H1 (cell line): ENCODE measurements at regions of chr14 and their contacts with region 1.

Region 1: DNA sequence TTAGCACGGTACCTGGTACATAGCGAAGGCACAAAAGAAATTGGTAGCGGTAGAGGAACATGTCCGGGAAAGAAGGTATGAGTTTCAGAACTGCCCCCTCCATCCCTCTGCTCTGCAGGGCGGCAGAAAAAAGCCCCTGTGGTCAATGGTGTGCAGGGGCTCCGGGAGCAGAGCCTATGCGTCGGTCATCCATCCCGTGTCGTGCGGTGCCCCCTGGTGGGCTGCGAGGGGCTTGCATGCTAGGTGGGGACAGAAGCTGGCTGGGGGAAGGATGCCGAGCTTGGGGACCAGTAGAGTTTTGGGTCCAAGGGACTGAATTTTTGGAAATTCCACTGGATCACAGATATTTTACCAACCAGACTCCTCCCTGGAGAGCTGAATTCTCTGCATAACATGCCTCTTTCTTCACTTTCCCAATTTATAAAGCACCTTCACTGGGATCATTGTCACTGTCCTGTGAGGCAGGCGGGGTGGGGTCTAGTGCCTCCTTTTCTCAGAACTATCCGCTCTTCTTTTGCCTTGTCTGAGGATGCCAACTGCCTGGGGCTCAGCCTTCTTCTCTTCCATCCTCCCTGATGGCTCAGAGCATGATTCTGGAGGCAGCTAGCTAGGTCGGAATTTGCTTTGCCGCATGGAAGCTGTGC is 148.7 kb downstream of the SMOC1 start:
- DNase-seq: peak; percentile 33 to 99
- H3K4me3 ChIP-seq: no peak overlapping the region
- H3K27ac ChIP-seq: no peak overlapping the region
- H3K4me1 ChIP-seq: peaks cover 2 to 9% (median 6%) of the 10 kb centered on the region in 4 experiments
- H3K27me3 ChIP-seq: no peaks in the 10 kb centered on the region; a peak in 1 of 7 replicates
- CTCF ChIP-seq: peak; percentile 95 to 98 (median 98)
- EP300 ChIP-seq: no peak
- POLR2A ChIP-seq: no peak
- RAD21 ChIP-seq: peak; percentile 99 to 100

Region 2: DNA sequence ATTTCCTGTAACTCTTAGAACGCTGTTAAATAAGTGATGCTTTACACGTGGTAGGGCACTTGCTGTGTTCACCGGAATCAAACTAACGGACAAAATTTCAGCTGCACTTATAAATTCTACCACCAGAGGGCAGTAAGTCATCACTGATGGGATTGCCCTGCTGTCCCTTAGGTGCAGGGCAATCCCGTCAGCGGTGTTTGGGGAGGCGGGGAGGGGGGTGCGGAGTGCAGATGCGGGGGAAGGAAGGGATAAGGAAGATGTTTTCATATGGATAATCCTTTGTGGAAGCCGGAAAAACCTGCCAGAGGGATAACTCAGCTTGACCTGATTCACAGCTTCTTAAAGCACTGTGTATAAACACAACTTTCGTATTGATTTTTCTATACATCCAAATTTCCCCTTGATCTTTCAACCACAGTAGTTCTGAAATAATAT is 209.1 kb before region 1 on chr14:
- CTCF ChIA-PET with region 1: interaction called, 132 read pairs
- POLR2A ChIA-PET with region 1: no interaction called
- DNase-seq: peak; percentile 51 to 79
- H3K4me3 ChIP-seq: no peak overlapping the region
- H3K27ac ChIP-seq: no peak overlapping the region
- H3K4me1 ChIP-seq: no peaks in the 10 kb centered on the region
- H3K27me3 ChIP-seq: no peaks in the 10 kb centered on the region
- CTCF ChIP-seq: peak; percentile 44 to 95 (median 81)
- EP300 ChIP-seq: peak in 1 of 2 experiments; percentile 48; a peak in 1 of 3 replicates
- POLR2A ChIP-seq: no peak
- RAD21 ChIP-seq: peak; percentile 98 to 99

Region 3: DNA sequence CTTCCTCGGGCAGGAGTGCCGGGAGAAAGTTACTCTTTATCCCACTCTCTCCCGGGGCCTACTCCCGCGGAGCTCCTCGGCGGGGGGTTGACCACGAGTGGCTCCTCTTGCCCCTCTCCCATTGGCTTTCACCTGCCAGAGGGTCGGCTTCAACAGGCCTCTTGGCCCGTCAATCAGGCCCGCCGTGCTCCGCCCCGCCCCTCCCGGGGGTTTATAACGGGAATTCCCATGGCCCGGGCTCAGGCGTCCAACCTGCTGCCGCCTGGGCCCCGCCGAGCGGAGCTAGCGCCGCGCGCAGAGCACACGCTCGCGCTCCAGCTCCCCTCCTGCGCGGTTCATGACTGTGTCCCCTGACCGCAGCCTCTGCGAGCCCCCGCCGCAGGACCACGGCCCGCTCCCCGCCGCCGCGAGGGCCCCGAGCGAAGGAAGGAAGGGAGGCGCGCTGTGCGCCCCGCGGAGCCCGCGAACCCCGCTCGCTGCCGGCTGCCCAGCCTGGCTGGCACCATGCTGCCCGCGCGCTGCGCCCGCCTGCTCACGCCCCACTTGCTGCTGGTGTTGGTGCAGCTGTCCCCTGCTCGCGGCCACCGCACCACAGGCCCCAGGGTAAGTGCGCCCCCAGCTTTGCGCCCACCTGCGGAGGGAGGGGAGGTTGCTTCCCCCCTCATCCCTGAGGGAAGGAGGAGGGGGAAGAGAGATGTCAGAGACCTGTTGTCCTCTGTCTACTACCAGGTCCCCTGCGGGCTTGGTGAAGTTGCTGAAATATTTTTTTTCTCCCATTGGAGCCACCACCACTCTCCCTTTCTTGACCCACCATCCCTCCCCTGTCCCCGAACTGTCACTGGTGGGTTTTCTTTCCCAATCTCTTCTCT is 148.5 kb before region 1 on chr14 and contains the start of gene SMOC1:
- CTCF ChIA-PET with region 1: interaction called, 79 read pairs
- POLR2A ChIA-PET with region 1: interaction called, 3 read pairs
- DNase-seq: peak; percentile 31 to 88
- H3K4me3 ChIP-seq: peak within 1 kb of the TSS; percentile 66 to 81 (median 74)
- H3K27ac ChIP-seq: no peak within 1 kb of the TSS
- H3K4me1 ChIP-seq: peaks cover 0 to 6% (median 4%) of the 10 kb centered on the region in 4 experiments; a peak in 3 of 7 replicates
- H3K27me3 ChIP-seq: peaks cover 3 to 26% (median 21%) of the 10 kb centered on the region in 4 experiments; a peak in 6 of 7 replicates
- CTCF ChIP-seq: no peak
- EP300 ChIP-seq: no peak
- POLR2A ChIP-seq: no peak
- RAD21 ChIP-seq: no peak; a peak in 1 of 4 replicates
- total RNA-seq, gene SMOC1: 1.6 and 2.4 TPM in 2 replicates

Region 4: DNA sequence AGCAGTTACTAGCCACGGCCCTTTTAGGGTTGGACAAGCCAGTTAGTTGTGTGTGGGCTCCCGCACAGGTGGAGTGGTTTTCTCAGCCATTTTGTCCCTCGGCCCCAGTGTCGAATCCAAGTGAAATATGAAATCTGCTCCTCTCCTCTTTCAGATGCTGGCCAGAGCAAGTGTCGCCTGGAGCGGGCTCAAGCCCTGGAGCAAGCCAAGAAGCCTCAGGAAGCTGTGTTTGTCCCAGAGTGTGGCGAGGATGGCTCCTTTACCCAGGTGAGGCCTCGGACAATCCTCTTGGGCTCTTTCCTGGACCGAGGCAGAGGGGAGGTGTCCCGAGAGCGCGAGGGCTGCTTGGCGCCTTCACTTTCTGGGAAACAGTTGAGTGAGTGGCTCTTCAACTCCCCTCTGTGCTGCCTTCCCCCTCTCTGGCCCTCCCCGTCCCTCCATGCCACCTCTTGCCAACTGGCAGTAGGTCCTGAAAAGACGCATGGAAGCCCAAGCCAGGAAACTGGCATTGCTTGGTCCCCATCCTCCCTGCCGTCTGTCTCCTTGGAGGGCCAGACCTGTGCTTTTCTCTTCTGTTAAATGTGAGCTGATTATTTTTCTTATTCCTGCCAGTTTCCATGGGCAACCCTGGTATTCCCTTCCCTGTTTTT is 74.5 kb before region 1 on chr14:
- CTCF ChIA-PET with region 1: interaction called, 15 read pairs
- POLR2A ChIA-PET with region 1: no interaction called
- DNase-seq: no peak
- H3K4me3 ChIP-seq: no peak overlapping the region
- H3K27ac ChIP-seq: no peak overlapping the region
- H3K4me1 ChIP-seq: no peaks in the 10 kb centered on the region; a peak in 1 of 7 replicates
- H3K27me3 ChIP-seq: no peaks in the 10 kb centered on the region
- CTCF ChIP-seq: no peak
- EP300 ChIP-seq: no peak
- POLR2A ChIP-seq: no peak
- RAD21 ChIP-seq: no peak

Region 5: GRCh38 chr14:70013269-70013873 is 14.5 kb before region 1 on chr14:
- CTCF ChIA-PET with region 1: interaction called, 45 read pairs
- POLR2A ChIA-PET with region 1: interaction called, 3 read pairs
- DNase-seq: peak; percentile 34 to 94
- H3K4me3 ChIP-seq: no peak overlapping the region
- H3K27ac ChIP-seq: no peak overlapping the region
- H3K4me1 ChIP-seq: peaks cover 0 to 8% (median 5%) of the 10 kb centered on the region in 4 experiments; a peak in 3 of 7 replicates
- H3K27me3 ChIP-seq: no peaks in the 10 kb centered on the region
- CTCF ChIP-seq: peak; percentile 85 to 92 (median 89)
- EP300 ChIP-seq: no peak
- POLR2A ChIP-seq: no peak
- RAD21 ChIP-seq: peak; percentile 77 to 87

Region 6: GRCh38 chr14:70121521-70121920 is 93.6 kb after region 1 on chr14:
- CTCF ChIA-PET with region 1: no interaction called
- POLR2A ChIA-PET with region 1: no interaction called
- DNase-seq: peak in 1 of 2 experiments; percentile 54
- H3K4me3 ChIP-seq: no peak overlapping the region
- H3K27ac ChIP-seq: no peak overlapping the region
- H3K4me1 ChIP-seq: peaks cover 9 to 16% (median 12%) of the 10 kb centered on the region in 4 experiments; a peak in 6 of 7 replicates
- H3K27me3 ChIP-seq: peaks cover 0 to 2% (median 0%) of the 10 kb centered on the region in 4 experiments; a peak in 3 of 7 replicates
- CTCF ChIP-seq: no peak
- EP300 ChIP-seq: no peak
- POLR2A ChIP-seq: no peak
- RAD21 ChIP-seq: no peak

Region 7: DNA sequence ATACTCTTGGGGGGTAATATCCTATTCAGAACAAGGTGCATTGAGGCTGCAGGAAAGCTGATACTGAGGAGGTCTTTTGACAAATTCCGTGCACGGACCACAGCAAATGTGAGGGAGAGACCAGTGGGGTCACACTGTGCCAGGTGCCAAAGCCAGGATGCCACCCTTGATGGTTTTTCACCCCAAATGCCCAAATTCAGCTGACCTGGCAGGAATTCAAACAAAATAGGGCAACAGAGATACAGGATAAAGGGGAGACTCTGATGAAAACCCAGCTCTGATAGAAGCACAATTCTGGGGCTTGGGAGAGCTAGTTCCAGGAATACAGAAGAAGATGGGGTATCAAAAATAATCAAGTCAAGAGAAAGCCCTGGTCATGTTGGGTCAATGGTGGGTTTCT is 105.6 kb after region 1 on chr14:
- CTCF ChIA-PET with region 1: no interaction called
- POLR2A ChIA-PET with region 1: no interaction called
- DNase-seq: no peak
- H3K4me3 ChIP-seq: no peak overlapping the region
- H3K27ac ChIP-seq: no peak overlapping the region
- H3K4me1 ChIP-seq: peaks cover 0 to 4% (median 0%) of the 10 kb centered on the region in 4 experiments; a peak in 1 of 7 replicates
- H3K27me3 ChIP-seq: no peaks in the 10 kb centered on the region
- CTCF ChIP-seq: no peak
- EP300 ChIP-seq: no peak
- POLR2A ChIP-seq: no peak
- RAD21 ChIP-seq: no peak